AG04450 (cell line): ENCODE measurements at regions of chr16 and their contacts with region 1.

Region 1: DNA sequence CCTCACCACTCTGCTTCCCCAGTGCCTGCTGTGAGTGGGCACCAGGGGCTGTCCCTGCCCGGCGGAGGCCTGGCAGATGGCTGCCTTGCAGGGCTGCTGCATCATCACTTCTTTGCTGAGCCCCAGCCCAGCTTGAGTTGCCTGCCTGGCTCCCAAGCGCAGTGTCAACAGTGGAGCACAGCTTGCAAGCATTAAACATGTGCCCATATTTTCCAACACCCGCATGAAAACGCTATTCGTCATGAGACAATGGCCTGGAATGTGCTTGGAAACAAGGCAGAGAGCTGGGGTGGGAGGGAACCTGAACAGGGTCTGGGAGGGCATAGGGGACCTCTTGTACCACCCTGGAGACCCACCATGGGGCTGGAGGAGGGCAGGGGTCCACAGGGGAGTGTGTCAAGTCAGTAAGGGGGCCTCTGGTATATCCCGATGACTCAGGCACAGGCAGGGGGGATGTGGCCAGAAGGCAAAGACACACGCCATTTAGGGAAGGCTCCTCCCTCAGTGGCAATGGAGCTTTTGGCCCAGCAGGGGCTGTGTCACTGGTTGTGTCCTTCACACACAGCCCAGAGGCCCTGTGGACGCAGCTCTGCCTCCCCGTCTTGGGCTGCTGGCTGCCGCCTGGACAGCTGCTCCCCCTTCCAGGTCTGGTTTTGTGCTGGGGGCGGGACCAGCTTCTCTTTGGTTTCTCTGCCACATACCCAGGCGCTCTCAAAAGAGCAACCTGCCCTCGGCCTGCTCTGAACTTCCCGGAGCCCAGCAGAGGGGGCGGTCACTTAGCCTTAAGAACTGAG is 17.4 kb upstream of the MTSS2 start:
- DNase-seq: peak; percentile 84
- H3K4me3 ChIP-seq: no peak overlapping the region
- H3K27ac ChIP-seq: peak overlapping the region; percentile 99
- H3K27me3 ChIP-seq: no peaks in the 10 kb centered on the region
- CTCF ChIP-seq: peak; percentile 60

Region 2: DNA sequence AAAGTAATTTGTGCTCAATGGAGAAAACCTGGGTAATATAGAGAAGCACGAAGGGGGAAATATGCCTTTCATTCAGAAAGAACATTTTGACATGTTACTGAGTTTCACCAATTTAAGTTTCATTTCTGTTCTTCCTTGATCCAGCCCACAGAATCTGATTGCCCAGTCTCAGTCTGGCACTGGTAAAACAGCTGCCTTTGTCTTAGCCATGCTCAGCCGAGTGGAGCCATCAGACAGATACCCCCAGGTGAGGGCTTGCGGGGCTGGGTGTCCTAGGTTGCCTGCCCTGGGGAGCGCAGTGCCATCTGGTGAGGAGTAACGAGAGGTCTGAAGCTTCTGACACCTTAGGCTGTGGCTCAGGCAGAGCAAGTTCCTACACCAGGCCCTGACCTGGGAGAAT is 338.8 kb before region 1 on chr16:
- CTCF ChIA-PET with region 1: no interaction called
- POLR2A ChIA-PET with region 1: no interaction called
- DNase-seq: no peak
- H3K4me3 ChIP-seq: no peak overlapping the region
- H3K27ac ChIP-seq: no peak overlapping the region
- H3K27me3 ChIP-seq: no peaks in the 10 kb centered on the region
- CTCF ChIP-seq: no peak

Region 3: DNA sequence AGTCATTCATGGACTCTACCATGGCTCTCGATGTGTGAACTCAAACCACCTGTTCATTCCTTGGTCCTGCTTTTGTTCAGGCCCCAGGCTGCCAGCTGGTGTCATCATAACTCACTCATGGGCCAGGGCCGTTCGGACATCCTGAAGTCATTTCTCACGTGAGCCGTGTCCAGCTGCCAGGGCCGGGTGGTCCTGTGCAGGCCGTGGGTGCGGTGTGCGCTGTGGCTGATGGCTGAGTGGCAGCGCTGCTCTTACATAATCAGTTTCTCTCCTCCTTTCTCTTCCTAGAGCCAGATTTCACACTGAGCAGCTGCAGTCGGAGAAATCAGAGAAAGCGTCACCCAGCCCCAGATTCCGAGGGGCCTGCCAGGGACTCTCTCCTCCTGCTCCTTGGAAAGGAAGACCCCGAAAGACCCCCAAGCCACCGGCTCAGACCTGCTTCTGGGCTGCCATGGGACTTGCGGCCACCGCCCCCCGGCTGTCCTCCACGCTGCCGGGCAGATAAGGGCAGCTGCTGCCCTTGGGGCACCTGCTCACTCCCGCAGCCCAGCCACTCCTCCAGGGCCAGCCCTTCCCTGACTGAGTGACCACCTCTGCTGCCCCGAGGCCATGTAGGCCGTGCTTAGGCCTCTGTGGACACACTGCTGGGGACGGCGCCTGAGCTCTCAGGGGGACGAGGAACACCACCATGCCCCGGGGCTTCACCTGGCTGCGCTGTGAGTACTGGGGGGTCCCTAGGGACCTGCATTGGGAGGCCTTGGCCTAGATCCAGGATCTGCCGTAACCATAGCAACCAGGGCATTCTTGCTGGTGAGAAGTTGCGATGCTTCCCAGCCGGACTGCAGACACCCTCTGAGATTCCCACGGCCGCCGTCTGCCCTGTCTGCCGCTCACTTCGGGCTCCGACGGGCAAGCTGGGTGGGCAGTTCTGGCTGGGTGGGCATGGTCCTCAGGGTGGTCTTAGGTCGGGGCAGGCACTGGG is 56.7 kb before region 1 on chr16 and contains the start of gene IL34:
- CTCF ChIA-PET with region 1: no interaction called
- POLR2A ChIA-PET with region 1: no interaction called
- DNase-seq: no peak
- H3K4me3 ChIP-seq: no peak within 1 kb of the TSS
- H3K27ac ChIP-seq: no peak within 1 kb of the TSS
- H3K27me3 ChIP-seq: no peaks in the 10 kb centered on the region
- CTCF ChIP-seq: no peak
- polyA plus RNA-seq, gene IL34: 3.0 and 5.1 TPM in 2 replicates

Region 4: DNA sequence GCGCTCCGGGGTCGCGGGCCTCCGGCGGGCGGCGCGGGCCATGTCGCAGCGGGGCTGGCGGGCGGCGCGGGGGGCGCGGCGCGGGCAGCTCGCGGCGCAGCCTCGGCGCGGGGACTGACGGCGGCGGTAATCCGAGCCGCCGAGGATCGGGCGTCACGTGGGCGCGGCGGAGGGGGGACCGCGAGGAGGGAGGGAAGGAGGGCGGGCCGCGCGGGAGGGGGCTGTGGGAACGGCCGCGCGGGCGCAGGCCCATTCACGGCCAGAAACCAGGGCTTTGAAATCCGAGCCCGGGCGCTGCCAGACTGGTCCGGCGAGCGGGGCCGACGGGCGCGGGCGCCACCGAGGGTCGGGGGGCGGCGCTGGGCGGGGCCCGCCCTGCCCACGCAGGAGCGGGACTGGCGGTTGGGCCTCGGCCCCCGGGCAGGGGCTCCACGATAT is 17.3 kb before region 1 on chr16 and contains the start of gene MTSS2:
- CTCF ChIA-PET with region 1: interaction called, 4 read pairs
- POLR2A ChIA-PET with region 1: interaction called, 14 read pairs
- DNase-seq: peak; percentile 68
- H3K4me3 ChIP-seq: peak within 1 kb of the TSS; percentile 82
- H3K27ac ChIP-seq: peak within 1 kb of the TSS; percentile 52
- H3K27me3 ChIP-seq: no peaks in the 10 kb centered on the region
- CTCF ChIP-seq: no peak
- polyA plus RNA-seq, gene MTSS2: 57.9 and 80.1 TPM in 2 replicates

Region 5: GRCh38 chr16:70691223-70692129 is 11.8 kb before region 1 on chr16:
- CTCF ChIA-PET with region 1: interaction called, 5 read pairs
- POLR2A ChIA-PET with region 1: interaction called, 16 read pairs
- DNase-seq: peak; percentile 96
- H3K4me3 ChIP-seq: no peak overlapping the region
- H3K27ac ChIP-seq: peak overlapping the region; percentile 97
- H3K27me3 ChIP-seq: no peaks in the 10 kb centered on the region
- CTCF ChIP-seq: no peak

Region 6: GRCh38 chr16:70715055-70715858 is 12.0 kb after region 1 on chr16:
- CTCF ChIA-PET with region 1: no interaction called
- POLR2A ChIA-PET with region 1: interaction called, 15 read pairs
- DNase-seq: peak; percentile 92
- H3K4me3 ChIP-seq: no peak overlapping the region
- H3K27ac ChIP-seq: peak overlapping the region; percentile 98
- H3K27me3 ChIP-seq: no peaks in the 10 kb centered on the region
- CTCF ChIP-seq: peak; percentile 20; the same call in 1 of the 2 replicates

Region 7: GRCh38 chr16:70759666-70760065 is 56.4 kb after region 1 on chr16:
- CTCF ChIA-PET with region 1: no interaction called
- POLR2A ChIA-PET with region 1: interaction called, 15 read pairs
- DNase-seq: no peak
- H3K4me3 ChIP-seq: no peak overlapping the region
- H3K27ac ChIP-seq: peak overlapping the region; percentile 93
- H3K27me3 ChIP-seq: no peaks in the 10 kb centered on the region
- CTCF ChIP-seq: no peak